Activated T-helper 2 cell treated with anti-CD3 and anti-CD28 coated beads, Interferon-gamma antibody, Interleukin-2, Interleukin-4, amounts not matched to agents 10 μg/mL and 5 μg/mL and 100 μg/mL, durations not matched to agents 14 hours and 24 hours and 36 hours (primary cell): ENCODE measurements at regions of chr1 and their contacts with region 1.

Region 1: DNA sequence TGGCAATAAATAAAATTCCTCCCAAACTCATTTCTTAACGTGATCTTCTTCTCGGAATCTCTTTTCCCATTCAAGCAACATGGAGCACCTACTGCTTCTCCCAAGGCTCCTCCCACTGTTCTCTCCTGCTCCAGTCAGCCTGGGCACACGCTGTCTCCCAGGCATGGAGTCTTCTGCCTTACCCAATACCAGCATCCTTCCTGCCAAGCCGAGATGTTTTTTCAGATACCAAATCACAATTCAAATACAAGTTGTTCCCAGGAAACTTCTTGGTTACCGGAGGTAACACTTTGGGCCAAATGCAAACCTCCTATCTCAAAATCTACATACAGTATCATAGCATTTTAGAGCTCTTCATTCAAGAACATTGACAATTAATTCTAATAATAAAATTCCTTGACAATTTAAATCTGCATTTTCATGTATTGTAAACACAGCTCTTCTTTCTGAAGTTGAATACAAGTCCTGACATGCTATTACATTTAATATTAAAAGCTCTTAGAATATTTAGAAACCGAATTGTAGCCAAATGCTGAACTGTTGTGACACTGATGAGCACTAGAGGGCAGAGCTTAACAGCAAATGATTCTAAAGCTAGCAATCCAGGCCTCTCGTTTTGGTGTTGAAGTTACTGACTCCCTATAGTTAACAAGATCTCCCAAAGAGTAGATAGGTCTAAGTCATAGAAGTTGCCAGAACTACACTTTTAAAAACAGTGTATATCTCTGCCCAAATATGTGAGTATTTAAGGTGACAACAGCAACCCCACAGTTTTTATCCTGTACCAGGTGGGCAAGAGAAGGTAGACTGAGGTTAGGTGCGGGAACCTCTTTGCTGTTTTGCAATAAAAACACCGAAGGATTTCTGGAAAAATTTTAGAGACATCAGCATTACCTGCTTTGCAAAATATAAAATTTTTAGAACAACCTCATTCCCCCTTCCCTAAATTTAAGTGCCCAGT is 52.3 kb downstream of the BCAR3 start:
- DNase-seq: peak; percentile 29
- H3K4me3 Mint-ChIP-seq: no peak overlapping the region
- H3K27ac Mint-ChIP-seq: no peak overlapping the region
- H3K4me1 Mint-ChIP-seq: peaks cover 12% of the 10 kb centered on the region
- H3K27me3 Mint-ChIP-seq: no peaks in the 10 kb centered on the region

Region 2: GRCh38 chr1:93304716-93305138 is 324.7 kb before region 1 on chr1:
- intact Hi-C with region 1: loop called (anchors 10 kb)
- DNase-seq: peak; percentile 13
- H3K4me3 Mint-ChIP-seq: no peak overlapping the region
- H3K27ac Mint-ChIP-seq: no peak overlapping the region
- H3K4me1 Mint-ChIP-seq: no peaks in the 10 kb centered on the region
- H3K27me3 Mint-ChIP-seq: no peaks in the 10 kb centered on the region

Region 3: GRCh38 chr1:93437976-93438605 is 191.3 kb before region 1 on chr1:
- intact Hi-C with region 1: loop called (anchors 1 kb)
- DNase-seq: no peak
- H3K4me3 Mint-ChIP-seq: no peak overlapping the region
- H3K27ac Mint-ChIP-seq: no peak overlapping the region
- H3K4me1 Mint-ChIP-seq: peaks cover 2% of the 10 kb centered on the region
- H3K27me3 Mint-ChIP-seq: peaks cover 23% of the 10 kb centered on the region

Region 4: GRCh38 chr1:94481473-94481933 is 852.1 kb after region 1 on chr1:
- intact Hi-C with region 1: no loop called
- DNase-seq: peak; percentile 11
- H3K4me3 Mint-ChIP-seq: no peak overlapping the region
- H3K27ac Mint-ChIP-seq: no peak overlapping the region
- H3K4me1 Mint-ChIP-seq: peaks cover 6% of the 10 kb centered on the region
- H3K27me3 Mint-ChIP-seq: no peaks in the 10 kb centered on the region